MCF 10A (cell line): ENCODE measurements at regions of chr2 and their contacts with region 1.

Region 1: DNA sequence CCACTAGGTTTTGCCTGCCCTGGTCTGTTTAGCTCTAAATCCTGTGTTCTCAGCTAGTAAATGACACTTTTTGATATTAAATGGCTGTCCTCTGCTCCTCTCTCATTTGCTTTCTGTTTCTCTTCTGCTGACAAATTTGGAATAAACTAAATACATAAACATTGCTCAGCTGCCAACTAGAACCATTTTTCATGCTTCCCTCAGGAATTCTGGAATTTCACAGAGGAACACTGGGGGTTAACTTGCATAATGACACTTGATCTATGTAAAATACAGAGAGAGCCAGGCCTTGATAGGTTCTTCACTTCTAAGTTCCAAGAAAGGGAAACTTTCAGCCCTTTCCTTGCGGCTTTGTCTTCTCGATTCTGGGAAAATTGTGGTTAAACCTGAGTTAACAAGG is 450.6 kb upstream of the ST6GAL2 start:
- DNase-seq: no peak
- H3K4me3 Mint-ChIP-seq: no peak overlapping the region
- H3K27ac Mint-ChIP-seq: no peak overlapping the region
- H3K4me1 Mint-ChIP-seq: peaks cover 17% of the 10 kb centered on the region
- H3K27me3 Mint-ChIP-seq: no peaks in the 10 kb centered on the region
- CTCF ChIP-seq: no peak

Region 2: DNA sequence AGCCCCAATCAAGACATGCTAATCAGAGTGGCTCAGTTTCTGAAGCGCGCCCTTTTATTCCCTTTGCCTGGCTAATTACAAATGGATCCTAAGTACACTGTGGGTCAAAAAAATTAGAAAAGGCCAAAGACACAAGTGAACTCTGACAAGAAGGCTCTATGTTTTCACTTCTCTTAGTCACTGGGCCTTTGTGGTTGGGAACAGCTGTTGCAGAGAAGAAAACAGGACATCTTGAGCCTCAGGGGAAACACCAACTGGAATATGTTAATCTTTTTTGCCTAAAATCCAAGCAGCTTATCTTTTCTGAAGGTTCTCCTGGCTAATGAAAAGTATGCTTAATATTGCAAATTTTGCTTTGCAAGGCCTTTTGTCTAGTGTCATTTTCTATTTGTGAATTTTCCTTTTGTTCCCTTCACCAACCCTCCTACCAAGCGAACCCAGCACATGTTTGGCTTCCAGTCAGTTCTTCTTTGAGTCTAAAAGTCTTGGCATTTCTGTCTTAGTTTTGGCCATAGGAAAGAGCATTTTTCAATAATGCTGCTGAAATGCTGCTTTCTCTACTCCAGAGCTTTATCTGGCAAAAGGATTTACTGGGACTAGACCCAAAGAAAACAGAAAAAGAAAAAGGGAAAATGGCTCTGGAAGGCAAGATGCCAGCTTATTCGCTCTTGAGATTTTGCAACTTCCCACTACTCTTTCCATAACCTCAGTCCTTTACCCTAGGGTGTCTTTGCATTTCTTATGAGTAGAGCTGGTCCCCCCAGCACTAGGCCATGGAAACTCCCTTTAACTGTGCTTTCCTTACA is 10.3 kb before region 1 on chr2:
- CTCF ChIA-PET with region 1: no interaction called
- POLR2A ChIA-PET with region 1: interaction called, 11 read pairs
- intact Hi-C with region 1: no loop called
- DNase-seq: peak; percentile 30
- H3K4me3 Mint-ChIP-seq: peak overlapping the region; percentile 4
- H3K27ac Mint-ChIP-seq: peak overlapping the region; percentile 71
- H3K4me1 Mint-ChIP-seq: peaks cover 25% of the 10 kb centered on the region
- H3K27me3 Mint-ChIP-seq: no peaks in the 10 kb centered on the region
- CTCF ChIP-seq: no peak